GM18951 (cell line): ENCODE measurements at regions of chr16 and their contacts with region 1.

Region 1: DNA sequence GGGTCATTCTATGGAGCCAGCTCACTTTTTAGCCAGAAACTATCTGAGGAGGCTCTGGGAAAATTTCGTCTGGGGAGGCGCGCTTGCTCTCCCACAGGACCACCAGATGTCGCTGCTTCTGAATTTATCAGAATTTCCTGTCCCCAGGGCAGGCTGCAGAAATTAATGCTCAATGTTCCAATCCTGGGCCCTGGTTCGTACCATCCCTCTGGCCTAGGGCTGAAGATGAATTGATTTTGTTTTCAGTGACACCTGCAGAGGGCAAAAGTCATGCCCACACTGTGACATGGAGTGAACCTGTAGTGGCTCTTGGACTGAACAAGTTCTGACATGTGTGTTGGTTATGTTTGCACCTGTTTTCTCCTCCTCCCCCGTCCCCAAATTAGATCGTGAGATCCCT is 482.6 kb downstream of the NPIPA7 start:
- POLR2A ChIP-seq: no peak

Region 2: DNA sequence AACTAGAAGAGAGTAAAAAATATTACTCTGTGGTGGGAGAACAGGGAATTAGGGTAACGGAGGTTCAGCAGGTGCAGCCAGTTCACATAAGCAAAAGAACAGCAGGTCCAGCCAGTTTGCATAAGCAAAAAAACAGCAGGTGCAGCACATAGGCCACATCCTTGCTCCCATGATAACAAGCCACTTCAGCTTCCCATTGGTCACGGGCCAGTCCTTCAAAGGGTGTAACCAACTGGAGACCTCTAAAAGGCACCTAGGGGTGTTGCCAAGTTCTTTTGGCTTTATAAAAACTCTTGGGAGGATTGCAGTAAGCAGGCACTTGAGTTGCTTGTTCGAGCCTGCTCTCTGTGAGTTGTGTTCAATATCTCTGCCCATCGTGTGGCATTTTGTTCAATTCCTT is 121.1 kb after region 1 on chr16:
- in situ Hi-C with region 1: no loop called
- POLR2A ChIP-seq: no peak

Region 3: DNA sequence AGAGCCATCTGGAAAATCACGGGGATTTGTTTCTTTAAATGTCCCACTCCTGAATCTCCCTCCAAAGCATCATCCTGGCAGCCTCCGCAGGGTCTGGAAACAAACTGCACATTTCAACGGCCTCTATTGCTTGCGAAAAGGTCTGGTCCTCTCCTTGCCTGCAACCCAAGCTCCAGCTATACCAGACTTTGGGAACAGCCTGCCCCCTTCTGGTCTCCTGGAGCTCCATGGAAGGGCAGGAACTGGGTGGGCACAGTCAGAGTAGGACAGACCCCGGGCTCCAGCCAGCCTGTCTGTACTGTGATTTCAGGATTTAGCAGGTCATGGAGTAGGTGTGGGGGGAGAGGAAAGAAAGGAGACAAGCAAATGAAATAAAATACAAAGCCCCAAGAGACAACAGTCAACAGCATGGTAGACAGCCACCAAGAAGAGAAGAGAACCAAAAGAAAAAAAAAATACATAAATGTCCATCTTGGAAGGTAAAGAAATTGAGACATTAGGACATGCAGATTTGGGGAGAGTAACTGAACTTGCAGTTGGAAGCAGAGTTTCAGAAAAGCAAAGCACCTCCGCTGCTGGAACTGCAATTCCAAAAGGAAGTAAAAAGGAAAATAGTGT is 606.5 kb after region 1 on chr16:
- in situ Hi-C with region 1: loop called (anchors 25 kb)
- POLR2A ChIP-seq: no peak